ENCODE measurements at regions of chr2 and their contacts with region 1.

Region 1: DNA sequence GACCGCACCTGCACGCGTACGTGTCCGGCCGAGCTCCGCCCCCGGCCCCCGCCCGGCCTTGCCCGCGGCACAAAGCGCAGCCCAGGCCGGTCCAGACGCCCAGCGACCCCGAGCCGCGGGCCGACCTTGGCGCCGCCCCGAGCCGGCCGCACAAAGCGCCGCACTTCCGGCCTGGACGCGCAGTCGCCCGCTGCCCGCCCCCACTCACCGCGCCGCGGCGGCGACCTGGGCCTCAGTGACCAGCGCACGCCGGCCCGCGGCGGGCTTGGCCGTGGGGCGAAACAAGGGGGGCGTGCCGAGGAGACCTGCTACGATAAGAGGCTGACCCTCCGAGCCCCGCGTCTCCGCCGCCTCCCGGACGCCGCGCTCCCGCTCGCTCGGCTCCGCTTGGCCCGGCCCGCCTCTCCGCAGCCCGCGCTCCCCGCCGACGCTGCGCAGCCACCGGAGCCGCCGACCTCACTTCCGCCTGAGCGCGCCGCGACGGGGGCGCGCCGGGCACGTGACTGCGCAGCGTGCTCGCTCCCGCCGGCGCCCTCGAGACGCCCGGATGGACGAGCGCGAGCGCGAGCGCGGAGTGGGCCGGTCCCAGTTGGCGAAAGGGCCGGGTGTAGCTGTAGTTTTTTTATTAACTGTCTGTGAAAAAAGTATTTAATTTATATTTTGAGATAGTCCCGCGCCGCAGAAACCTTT is at the start of gene FAM168B:
- DNase-seq: peak; percentile 86
- H3K4me3 Mint-ChIP-seq: peak within 1 kb of the TSS; percentile 85
- H3K27ac Mint-ChIP-seq: peak within 1 kb of the TSS; percentile 92
- H3K4me1 Mint-ChIP-seq: peaks cover 20% of the 10 kb centered on the region
- H3K27me3 Mint-ChIP-seq: no peaks in the 10 kb centered on the region
- total RNA-seq, gene FAM168B: 52.7 to 55.0 TPM

Region 2: GRCh38 chr2:131040661-131041401 is 52.3 kb before region 1 on chr2:
- CTCF ChIA-PET with region 1: interaction called, 6 read pairs
- intact Hi-C with region 1: loop called (anchors 2 kb)
- DNase-seq: peak; percentile 51
- H3K4me3 Mint-ChIP-seq: peak overlapping the region; percentile 54
- H3K27ac Mint-ChIP-seq: no peak overlapping the region
- H3K4me1 Mint-ChIP-seq: peaks cover 29% of the 10 kb centered on the region
- H3K27me3 Mint-ChIP-seq: peaks cover 4% of the 10 kb centered on the region

Region 3: GRCh38 chr2:131148426-131148825 is 55.3 kb after region 1 on chr2:
- CTCF ChIA-PET with region 1: no interaction called
- intact Hi-C with region 1: no loop called
- DNase-seq: no peak
- H3K4me3 Mint-ChIP-seq: no peak overlapping the region
- H3K27ac Mint-ChIP-seq: no peak overlapping the region
- H3K4me1 Mint-ChIP-seq: no peaks in the 10 kb centered on the region
- H3K27me3 Mint-ChIP-seq: no peaks in the 10 kb centered on the region